Transverse colon (tissue), 4 donors: ENCODE measurements at regions of chr17 and their contacts with region 1.

Region 1: GRCh38 chr17:1865252-1866037 is 35.6 kb downstream of the RPA1 start:
- DNase-seq: peak; percentile 48
- H3K4me3 ChIP-seq: no peak overlapping the region
- H3K27ac ChIP-seq: no peak overlapping the region
- H3K4me1 ChIP-seq: no peaks in the 10 kb centered on the region
- H3K27me3 ChIP-seq: no peaks in the 10 kb centered on the region
- CTCF ChIP-seq: peak; percentile 61 to 75 (median 63)
- EP300 ChIP-seq: no peak
- POLR2A ChIP-seq: no peak

Region 2: GRCh38 chr17:1661045-1661444 is 204.4 kb before region 1 on chr17:
- in situ Hi-C with region 1: loop called in 1 of 4 experiments (anchors 10 kb)
- intact Hi-C with region 1: loop called (anchors 10 kb)
- DNase-seq: no peak
- H3K4me3 ChIP-seq: no peak overlapping the region
- H3K27ac ChIP-seq: no peak overlapping the region
- H3K4me1 ChIP-seq: no peaks in the 10 kb centered on the region
- H3K27me3 ChIP-seq: no peaks in the 10 kb centered on the region
- CTCF ChIP-seq: no peak
- EP300 ChIP-seq: no peak
- POLR2A ChIP-seq: no peak